AG04449 (cell line): ENCODE measurements at regions of chr11 and their contacts with region 1.

Region 1: GRCh38 chr11:128172046-128172878 is 415.1 kb downstream of the ETS1 start:
- DNase-seq: peak; percentile 41
- H3K4me3 ChIP-seq: no peak overlapping the region
- CTCF ChIP-seq: peak; percentile 70

Region 2: GRCh38 chr11:128026596-128026995 is 145.7 kb before region 1 on chr11:
- CTCF ChIA-PET with region 1: interaction called, 31 read pairs
- POLR2A ChIA-PET with region 1: no interaction called
- DNase-seq: peak; percentile 89
- H3K4me3 ChIP-seq: no peak overlapping the region
- CTCF ChIP-seq: no peak

Region 3: DNA sequence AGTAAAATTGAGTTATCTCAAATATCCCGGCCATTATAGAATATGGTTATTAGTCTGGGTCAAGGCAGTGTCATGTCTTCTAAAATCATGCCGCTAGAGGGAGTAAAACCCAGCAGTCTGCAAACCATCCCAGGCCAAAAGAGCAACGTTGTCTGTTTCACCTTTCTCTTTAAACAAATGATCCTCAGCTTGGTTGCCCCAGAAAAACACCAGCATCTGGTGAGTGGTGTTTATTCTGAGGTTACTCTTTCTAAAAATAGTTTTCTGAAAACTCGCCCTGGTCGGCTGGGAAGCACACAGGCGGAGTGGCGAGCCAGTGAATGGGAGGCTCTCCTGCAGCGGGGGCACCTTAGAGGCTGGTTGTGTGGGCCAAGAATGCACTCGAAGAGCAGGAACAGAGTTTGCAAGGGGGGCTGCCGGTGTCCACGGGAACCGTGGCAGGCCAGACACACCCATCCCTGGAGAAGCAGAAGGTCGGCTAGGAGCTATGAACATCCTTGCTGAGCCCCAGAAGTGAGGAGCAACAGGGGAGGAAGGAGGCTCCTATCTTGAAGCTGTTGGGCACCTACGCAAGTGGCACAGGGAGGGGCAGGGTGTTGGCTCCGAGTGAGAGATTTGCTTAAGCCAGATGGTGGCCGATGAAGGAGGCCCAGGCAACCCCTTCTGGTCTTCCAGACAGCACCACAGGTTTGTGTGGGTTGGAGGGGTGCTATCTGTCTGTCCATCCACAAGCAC is 118.0 kb after region 1 on chr11:
- CTCF ChIA-PET with region 1: interaction called, 36 read pairs
- POLR2A ChIA-PET with region 1: no interaction called
- DNase-seq: peak; percentile 69
- H3K4me3 ChIP-seq: no peak overlapping the region; the same call in 1 of the 2 replicates
- CTCF ChIP-seq: peak; percentile 65

Region 4: GRCh38 chr11:128399251-128400121 is 227.2 kb after region 1 on chr11:
- CTCF ChIA-PET with region 1: no interaction called
- POLR2A ChIA-PET with region 1: no interaction called
- DNase-seq: peak; percentile 56
- H3K4me3 ChIP-seq: no peak overlapping the region
- CTCF ChIP-seq: no peak

Region 5: GRCh38 chr11:128814856-128815705 is 642.8 kb after region 1 on chr11:
- CTCF ChIA-PET with region 1: interaction called, 12 read pairs
- POLR2A ChIA-PET with region 1: no interaction called
- DNase-seq: peak; percentile 85
- H3K4me3 ChIP-seq: no peak overlapping the region
- CTCF ChIP-seq: no peak

Region 6: DNA sequence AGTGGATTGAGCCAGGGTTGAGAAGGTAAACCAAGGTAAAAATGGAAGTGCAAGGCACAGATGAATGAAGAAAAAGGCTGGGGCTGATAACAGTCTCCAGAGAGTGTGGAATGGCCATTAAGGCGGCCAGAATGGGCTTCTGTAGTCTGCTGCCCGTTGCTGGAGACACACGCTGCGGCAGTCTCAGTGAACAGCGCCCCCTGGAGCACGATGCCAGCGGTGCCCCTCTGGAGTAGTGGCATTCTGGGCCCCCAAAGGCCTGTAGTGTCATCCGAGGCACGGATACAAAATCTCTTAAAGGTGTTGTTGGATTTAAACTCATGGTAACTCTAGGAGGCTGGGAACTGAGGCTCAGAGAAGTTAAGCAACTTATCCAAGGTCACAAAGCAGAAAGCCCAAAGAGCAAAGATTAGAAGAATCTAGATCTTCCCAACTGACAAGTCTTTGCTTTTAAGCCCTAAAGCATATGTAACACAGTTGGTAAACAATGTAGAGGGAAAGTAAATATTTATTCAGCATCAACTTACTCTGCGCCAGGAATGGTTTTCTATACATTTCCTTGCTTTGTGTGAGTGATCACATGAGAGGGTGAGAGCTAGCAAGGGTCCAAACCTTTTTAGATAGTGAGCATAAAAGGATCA is 676.7 kb after region 1 on chr11:
- CTCF ChIA-PET with region 1: interaction called, 10 read pairs
- POLR2A ChIA-PET with region 1: no interaction called
- DNase-seq: no peak
- H3K4me3 ChIP-seq: no peak overlapping the region
- CTCF ChIP-seq: peak; percentile 76

Region 7: DNA sequence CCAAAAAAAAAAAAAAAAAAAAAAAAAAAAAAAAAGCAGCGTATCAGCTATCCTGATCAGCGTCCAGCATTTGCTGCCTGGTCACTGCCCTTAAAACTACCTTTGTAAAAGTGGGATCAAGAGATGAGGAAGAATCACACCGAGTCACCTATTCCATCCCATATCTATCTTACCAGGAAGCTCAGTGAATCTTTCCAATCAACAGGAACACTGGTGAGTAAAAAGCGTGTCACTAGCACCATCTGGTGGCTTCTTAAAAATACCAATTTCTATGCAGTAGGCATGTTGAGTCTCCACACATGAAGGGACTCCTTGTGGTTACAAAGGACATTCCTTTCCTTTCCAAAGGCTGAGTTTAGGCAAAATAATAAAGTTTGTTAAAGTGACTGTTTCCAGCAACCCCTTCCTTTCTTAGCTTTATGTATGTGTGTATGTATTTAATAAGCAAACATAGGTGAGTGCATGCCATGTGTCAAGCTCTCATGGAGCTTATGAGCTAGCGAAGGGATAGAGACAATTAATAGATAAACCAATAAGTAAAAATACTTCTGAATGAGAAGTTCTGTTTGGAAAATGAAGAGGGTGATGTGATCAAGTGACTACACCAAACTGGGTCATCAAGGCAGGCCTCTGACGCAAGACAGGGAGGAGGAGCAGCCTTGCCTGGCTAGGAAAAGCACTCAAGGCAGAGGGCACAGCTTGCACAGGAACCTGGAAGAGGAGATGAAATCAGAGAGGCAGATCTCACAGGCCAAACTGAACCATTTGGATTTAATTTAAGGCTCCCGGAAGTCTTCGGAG is 784.3 kb after region 1 on chr11:
- CTCF ChIA-PET with region 1: interaction called, 37 read pairs
- POLR2A ChIA-PET with region 1: no interaction called
- DNase-seq: peak; percentile 26
- H3K4me3 ChIP-seq: no peak overlapping the region
- CTCF ChIP-seq: peak; percentile 57